Sigmoid colon (tissue), 7 donors: ENCODE measurements at regions of chr11 and their contacts with region 1.

Region 1: DNA sequence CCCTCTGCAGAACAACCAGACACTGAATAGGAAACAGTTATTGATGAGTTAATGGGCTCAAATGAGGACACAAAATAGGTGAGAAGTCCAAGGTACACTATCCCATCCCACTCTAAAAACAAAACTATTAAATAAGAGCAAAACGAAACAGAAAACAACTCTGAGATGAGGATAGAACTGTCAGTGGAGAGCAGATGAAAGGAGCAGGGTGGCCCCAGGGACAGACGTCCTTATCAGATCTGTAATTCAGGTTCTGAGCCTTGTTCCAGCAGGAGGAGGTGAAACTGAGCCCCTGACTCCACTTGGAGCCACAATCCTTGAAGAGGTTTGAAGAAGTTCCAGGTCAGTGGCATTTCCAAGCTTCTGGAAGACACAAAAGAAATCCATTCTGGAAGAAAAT is 8.5 kb upstream of the SNX19 start:
- DNase-seq: no peak
- H3K4me3 ChIP-seq: no peak overlapping the region
- H3K27ac ChIP-seq: no peak overlapping the region
- H3K4me1 ChIP-seq: no peaks in the 10 kb centered on the region
- H3K27me3 ChIP-seq: no peaks in the 10 kb centered on the region
- CTCF ChIP-seq: no peak
- EP300 ChIP-seq: no peak
- POLR2A ChIP-seq: no peak

Region 2: DNA sequence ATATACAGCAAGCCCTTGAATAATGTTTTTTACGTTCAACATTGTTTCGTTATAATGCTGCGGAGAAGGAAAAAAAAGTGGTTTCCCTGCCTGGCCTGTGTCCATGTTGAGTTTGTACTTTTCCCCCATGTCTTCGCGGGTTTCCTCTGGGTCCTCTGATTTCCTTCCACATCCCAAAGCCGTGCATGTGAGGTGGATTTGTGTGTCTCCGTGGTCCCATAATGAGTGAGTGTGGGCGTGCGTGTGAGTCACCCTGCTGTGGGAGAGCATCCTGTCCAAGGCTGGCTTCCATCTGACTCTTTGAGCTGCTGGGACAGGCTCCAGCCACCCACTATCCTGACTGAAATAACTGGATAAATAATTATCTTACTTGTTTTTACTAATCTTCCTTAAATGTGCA is 21.1 kb after region 1 on chr11:
- intact Hi-C with region 1: no loop called
- DNase-seq: peak; percentile 74
- H3K4me3 ChIP-seq: no peak overlapping the region
- H3K27ac ChIP-seq: no peak overlapping the region
- H3K4me1 ChIP-seq: no peaks in the 10 kb centered on the region
- H3K27me3 ChIP-seq: no peaks in the 10 kb centered on the region
- CTCF ChIP-seq: no peak
- EP300 ChIP-seq: no peak
- POLR2A ChIP-seq: no peak

Region 3: DNA sequence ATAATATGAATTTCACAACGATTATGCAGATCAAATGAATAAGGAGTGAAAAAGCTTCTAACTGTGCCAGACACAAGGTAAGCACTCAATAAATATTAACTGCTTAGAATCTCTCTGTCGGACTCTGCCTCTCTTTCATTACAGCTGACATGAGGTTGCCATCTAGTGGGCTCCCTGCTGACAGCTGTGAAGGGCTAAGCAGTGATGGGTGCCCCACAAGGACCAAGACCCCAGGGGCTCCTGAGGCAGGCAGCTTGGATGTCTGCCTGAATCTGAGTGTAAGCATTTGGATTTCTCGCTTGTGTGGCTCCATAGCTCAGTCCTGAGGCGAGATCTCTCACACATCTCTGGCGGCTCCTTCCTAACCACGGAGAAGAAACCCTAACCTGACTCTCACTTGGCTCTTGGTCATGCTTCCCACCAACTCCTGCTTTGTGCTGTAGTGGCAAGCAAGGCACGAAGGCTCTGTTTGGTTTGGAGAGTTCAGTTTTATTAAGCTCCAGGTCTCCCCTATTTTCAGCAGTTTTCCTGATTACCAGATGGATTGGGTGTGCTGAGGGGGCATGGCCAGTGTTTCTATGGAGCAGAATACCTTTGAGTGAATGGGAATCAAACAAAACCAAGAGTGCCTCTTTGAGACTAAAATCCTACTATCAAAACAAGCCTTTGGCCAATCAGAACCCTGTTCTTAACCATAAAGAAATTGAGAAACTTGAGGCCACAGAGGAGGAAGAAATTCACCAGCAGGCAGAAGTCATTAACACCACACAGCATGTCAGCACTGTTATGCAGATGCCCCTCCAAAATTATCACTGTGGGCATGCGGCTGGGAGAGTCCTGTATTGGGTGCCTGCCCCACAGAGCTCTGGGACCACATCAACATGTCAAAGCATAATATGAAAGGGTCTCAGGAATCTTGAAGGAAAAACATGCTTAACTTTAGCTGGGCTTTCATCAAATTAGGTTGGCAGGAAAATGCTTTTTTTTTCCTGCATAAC is 292.8 kb after region 1 on chr11:
- intact Hi-C with region 1: loop called (anchors 10 kb)
- DNase-seq: no peak
- H3K4me3 ChIP-seq: no peak overlapping the region
- H3K27ac ChIP-seq: no peak overlapping the region
- H3K4me1 ChIP-seq: no peaks in the 10 kb centered on the region
- H3K27me3 ChIP-seq: no peaks in the 10 kb centered on the region
- CTCF ChIP-seq: peak in 2 of 4 experiments; percentile 30 to 51
- EP300 ChIP-seq: no peak
- POLR2A ChIP-seq: no peak